ENCODE measurements at regions of chr12 and their contacts with region 1.

Region 1: GRCh38 chr12:10140001-10140400 is 10.0 kb upstream of the CLEC7A start:
- DNase-seq: peak; percentile 25 to 51 (median 40)
- ATAC-seq: peak; percentile 62 to 67
- H3K4me3 ChIP-seq: no peak overlapping the region
- H3K27ac ChIP-seq: no peak overlapping the region
- H3K4me1 ChIP-seq: no peaks in the 10 kb centered on the region
- H3K27me3 ChIP-seq: no peaks in the 10 kb centered on the region

Region 2: DNA sequence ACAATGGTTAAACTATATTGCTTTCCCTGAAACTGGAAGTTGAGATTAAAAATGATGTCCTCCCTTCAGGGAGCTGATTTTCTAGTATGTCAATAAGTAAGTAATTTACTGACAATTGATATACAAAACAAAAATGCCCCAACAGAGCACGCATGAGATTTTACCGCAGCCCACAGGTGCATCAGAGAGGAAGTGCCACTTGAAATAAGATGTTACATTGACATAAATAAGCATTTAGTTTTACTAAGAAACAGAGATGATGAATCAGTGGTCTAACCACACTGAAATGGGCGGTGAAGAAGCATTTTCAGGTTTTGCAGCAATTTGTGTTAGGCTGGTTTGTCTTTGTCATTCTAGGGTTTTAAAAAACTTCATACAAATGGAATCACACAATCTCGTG is 398.3 kb before region 1 on chr12:
- intact Hi-C with region 1: loop called in 1 of 4 experiments (anchors 10 kb)
- DNase-seq: no peak
- ATAC-seq: no peak
- H3K4me3 ChIP-seq: no peak overlapping the region
- H3K27ac ChIP-seq: no peak overlapping the region
- H3K4me1 ChIP-seq: peaks cover 3% of the 10 kb centered on the region
- H3K27me3 ChIP-seq: no peaks in the 10 kb centered on the region

Region 3: DNA sequence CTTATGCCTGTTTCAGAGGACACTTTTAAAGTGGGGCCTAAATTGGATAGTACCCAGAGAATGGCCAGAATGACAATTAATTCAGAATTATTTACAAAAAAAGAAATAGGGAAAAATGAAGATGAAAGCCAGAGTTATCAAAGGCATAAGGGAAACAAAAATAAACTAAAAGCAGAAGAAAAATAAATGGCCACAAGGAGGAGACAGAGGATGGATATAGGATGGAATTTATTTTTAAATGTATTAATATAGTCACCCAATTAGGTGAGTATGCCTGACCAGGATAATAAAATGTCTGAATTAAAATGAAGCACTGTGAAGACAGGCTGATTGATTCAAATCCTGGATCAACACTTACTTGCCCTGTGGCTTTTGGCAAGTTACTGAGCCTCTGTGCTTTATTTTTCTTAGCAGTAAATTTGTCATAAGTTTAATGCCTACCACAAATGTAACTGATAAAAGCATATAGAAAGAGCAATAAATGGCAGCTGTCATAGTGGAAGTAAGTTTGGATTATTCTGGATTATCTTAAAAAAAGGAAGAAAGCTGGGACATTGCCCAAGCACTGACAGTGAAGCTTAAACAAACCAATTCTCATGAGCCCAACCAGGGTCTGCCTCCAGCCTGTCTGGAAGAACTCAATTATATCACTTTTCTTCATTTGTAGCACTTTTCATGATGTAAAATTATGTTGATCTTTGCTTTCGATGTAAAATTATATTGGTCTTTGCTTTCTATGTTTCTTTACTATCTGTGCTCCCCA is 106.0 kb before region 1 on chr12:
- intact Hi-C with region 1: loop called (anchors 1 to 5 kb)
- DNase-seq: peak in 1 of 3 donors; percentile 20
- ATAC-seq: no peak
- H3K4me3 ChIP-seq: no peak overlapping the region
- H3K27ac ChIP-seq: no peak overlapping the region
- H3K4me1 ChIP-seq: no peaks in the 10 kb centered on the region
- H3K27me3 ChIP-seq: no peaks in the 10 kb centered on the region

Measured in right cardiac atrium (tissue), 5 donors.